SK-N-SH (cell line): ENCODE measurements at regions of chr12 and their contacts with region 1.

Region 1: DNA sequence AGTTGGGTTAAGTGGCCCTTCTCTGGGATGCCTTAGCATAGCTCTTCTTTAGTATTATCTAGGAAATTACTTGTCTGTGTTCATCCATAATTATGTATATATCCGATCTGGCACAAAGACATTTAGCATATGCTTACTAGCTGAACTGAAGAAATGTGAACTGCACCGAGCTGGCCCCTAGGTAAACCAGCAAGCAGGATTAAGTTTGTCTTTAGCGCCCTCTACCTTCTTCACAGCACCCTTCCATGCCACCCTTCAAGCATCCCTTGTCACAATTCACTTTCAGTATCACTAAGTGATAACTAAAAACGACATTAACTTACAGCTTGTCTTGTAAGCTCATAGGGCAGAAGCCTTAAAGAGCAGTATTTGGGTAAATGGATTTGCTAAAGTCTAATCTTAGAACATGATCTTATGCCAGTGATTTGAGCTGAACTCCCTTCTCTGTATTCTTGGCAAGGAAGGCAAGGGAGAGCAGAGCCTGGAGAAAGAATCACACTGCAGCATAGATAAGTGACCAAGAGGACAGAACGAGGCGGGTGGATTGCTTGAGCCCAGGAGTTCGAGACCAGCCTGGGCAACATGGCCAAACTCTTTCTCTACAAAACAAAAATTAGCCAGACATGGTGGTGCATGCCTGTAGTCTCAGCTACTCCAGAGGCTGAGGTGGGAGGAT is 2.6 kb upstream of the HAL start:
- DNase-seq: peak; percentile 75
- H3K4me3 ChIP-seq: no peak overlapping the region; a peak in 1 of 4 replicates
- H3K27ac ChIP-seq: no peak overlapping the region
- H3K4me1 ChIP-seq: no peaks in the 10 kb centered on the region
- H3K27me3 ChIP-seq: no peaks in the 10 kb centered on the region
- CTCF ChIP-seq: peak; percentile 64
- EP300 ChIP-seq: no peak
- RAD21 ChIP-seq: peak; percentile 89

Region 2: DNA sequence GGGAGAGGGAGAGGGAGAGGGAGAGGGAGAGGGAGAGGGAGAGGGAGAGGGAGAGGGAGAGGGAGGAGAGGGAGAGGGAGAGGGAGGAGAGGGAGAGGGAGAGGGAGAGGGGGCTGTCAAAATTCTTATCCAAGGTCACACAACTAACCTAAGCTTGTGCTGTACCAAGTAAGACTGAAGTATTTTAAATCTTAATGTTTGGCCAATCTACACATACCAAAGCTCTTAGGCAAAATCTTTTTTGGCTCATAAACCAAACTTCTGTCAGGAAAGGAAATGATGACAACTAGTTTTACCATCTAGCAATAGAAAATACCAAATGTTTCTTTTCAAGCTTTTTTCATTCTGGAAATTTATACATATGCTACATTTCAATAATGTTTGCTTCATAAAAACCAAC is 90.2 kb before region 1 on chr12:
- CTCF ChIA-PET with region 1: interaction called, 16 read pairs
- POLR2A ChIA-PET with region 1: no interaction called
- DNase-seq: no peak
- H3K4me3 ChIP-seq: no peak overlapping the region
- H3K27ac ChIP-seq: no peak overlapping the region
- H3K4me1 ChIP-seq: no peaks in the 10 kb centered on the region
- H3K27me3 ChIP-seq: no peaks in the 10 kb centered on the region; the same call in 1 of the 2 replicates
- CTCF ChIP-seq: no peak
- EP300 ChIP-seq: no peak
- RAD21 ChIP-seq: no peak

Region 3: DNA sequence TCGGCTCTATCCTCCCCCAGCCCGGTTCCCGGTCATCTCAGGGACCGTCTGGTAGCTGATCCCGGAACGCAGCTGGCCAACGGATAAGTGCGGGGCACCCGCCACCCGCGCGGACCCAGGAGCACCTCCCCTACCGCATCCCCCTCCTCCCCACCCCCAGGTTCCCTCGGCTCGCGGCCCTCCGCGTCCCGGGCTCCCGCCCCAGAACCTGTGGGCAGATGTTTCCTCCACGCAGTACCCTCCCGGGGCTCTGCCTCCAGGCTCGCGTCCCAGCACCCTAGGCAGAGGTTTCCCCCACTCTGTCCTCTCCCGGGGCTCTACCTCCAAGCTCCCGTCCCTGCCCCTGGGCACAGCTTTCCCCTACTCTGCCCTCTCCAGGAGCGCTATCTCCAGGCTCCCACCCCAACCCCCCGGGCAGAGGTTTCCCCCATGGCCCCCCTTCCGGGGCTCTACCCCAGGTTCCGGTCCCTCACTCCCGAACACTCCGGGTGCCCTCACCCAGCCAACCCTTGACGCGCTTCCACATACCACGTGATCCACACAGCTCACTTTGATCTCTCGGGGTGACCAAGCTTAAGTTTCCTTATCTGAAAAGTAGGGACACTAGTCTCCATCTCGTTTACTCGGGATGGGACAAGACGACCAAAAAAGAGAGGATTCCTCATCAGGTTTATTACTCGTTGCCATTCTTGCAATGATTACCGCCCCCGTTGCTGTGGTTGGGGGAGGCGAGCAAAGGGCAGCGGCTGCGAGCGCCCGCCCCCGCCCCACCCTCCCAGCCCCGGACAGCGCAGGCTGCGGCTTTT is 56.0 kb before region 1 on chr12 and contains the start of gene CCDC38:
- CTCF ChIA-PET with region 1: interaction called, 41 read pairs
- POLR2A ChIA-PET with region 1: interaction called, 5 read pairs
- DNase-seq: peak; percentile 98
- H3K4me3 ChIP-seq: peak within 1 kb of the TSS; percentile 69 to 76
- H3K27ac ChIP-seq: peak within 1 kb of the TSS in 1 of 2 experiments; percentile 97; a peak in 2 of 4 replicates
- H3K4me1 ChIP-seq: peaks cover 0 to 7% of the 10 kb centered on the region in 2 experiments; a peak in 2 of 4 replicates
- H3K27me3 ChIP-seq: no peaks in the 10 kb centered on the region
- CTCF ChIP-seq: no peak
- EP300 ChIP-seq: 0 out of 4 replicates have a peak, but pooled peaks of 1 of the 2 experiments have one; percentile 32
- RAD21 ChIP-seq: no peak
- polyA plus RNA-seq, gene CCDC38: not detected in 2 replicates

Region 4: GRCh38 chr12:95959107-95959506 is 39.6 kb before region 1 on chr12:
- CTCF ChIA-PET with region 1: interaction called, 17 read pairs
- POLR2A ChIA-PET with region 1: no interaction called
- DNase-seq: peak; percentile 53
- H3K4me3 ChIP-seq: no peak overlapping the region
- H3K27ac ChIP-seq: no peak overlapping the region
- H3K4me1 ChIP-seq: no peaks in the 10 kb centered on the region
- H3K27me3 ChIP-seq: no peaks in the 10 kb centered on the region
- CTCF ChIP-seq: peak; percentile 39
- EP300 ChIP-seq: no peak
- RAD21 ChIP-seq: peak; percentile 73

Region 5: DNA sequence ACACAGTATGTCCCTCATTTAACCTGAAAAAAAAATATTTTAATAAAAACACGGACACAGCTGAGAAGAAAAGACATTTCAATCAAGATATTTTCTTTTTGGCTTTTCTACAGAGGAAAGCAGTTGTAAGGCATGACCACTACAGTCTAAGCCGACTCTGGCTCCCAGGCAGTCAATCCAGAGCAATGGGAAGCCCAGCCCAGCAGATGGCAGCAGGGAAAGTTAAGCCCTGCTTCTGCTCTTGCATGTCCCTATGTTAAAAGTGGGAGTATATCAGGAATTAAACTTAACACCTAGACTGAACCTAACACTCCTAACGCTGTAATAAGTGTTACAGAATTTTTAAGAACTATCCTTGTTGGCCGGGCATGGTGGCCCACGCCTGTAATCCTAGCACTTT is 16.9 kb after region 1 on chr12:
- CTCF ChIA-PET with region 1: interaction called, 39 read pairs
- POLR2A ChIA-PET with region 1: no interaction called
- DNase-seq: no peak
- H3K4me3 ChIP-seq: no peak overlapping the region
- H3K27ac ChIP-seq: no peak overlapping the region
- H3K4me1 ChIP-seq: no peaks in the 10 kb centered on the region
- H3K27me3 ChIP-seq: no peaks in the 10 kb centered on the region
- CTCF ChIP-seq: peak; percentile 52
- EP300 ChIP-seq: no peak
- RAD21 ChIP-seq: peak; percentile 34